CD14-positive monocyte (primary cell): ENCODE measurements at regions of chr19 and their contacts with region 1.

Region 1: DNA sequence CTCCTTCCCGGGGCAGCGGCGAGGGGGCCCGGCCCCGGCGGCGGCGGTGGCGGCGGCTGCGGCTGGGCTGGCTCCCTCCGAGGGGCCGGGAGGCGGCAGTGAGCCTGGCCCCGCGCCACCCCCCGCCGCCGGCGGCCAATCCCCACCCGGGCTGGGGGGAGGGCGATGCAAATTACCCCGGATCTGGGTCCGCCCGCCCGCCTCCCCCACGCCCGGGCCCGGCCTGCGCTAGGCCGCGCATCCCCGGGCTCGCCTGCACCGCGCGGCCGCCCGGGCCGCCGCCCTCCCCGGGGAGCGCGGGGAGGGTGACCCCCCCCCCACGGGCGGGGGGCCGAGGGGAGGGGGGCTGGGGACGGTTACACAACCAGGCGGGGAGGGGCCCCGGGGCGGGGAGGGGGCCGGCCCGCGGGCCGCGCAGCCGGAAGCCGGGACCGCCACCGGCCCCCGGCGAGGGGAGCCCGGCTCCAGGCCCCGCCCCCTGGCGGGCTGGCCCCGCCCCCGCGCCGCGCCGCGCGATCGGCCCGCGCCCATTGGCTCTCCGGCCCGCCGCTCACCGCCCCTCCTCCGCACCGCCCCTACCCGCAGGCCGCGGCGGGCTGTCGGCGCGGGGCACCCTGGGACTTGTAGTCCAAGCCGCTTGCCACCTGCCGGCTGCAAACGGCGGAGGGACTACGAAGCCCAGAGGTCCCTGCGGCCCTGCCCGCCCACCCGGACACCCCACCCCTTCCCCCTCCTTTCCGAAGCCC is 1.1 kb downstream of the ZBTB7A start:
- DNase-seq: peak; percentile 93 to 96 (median 95)
- H3K4me3 ChIP-seq: peak overlapping the region; percentile 86 to 96 (median 93)
- H3K4me3 Mint-ChIP-seq: peak overlapping the region in 1 of 2 donors; percentile 67
- H3K27ac ChIP-seq: peak overlapping the region in 1 of 2 donors; percentile 77
- H3K27ac Mint-ChIP-seq: peak overlapping the region in 3 of 7 donors; percentile 16 to 79 (median 75)
- H3K4me1 ChIP-seq: peaks cover 58 to 62% of the 10 kb centered on the region in 2 donors
- H3K4me1 Mint-ChIP-seq: peaks cover 48% of the 10 kb centered on the region
- H3K27me3 ChIP-seq: no peaks in the 10 kb centered on the region
- H3K27me3 Mint-ChIP-seq: peaks cover 0 to 2% (median 0%) of the 10 kb centered on the region in 3 donors
- CTCF ChIP-seq: no peak

Region 2: GRCh38 chr19:3984908-3985642 is 80.5 kb before region 1 on chr19 and contains the start of gene EEF2:
- intact Hi-C with region 1: loop called in 1 of 2 experiments (anchors 5 kb)
- DNase-seq: peak; percentile 92 to 93 (median 92)
- H3K4me3 ChIP-seq: peak within 1 kb of the TSS; percentile 76 to 97 (median 93)
- H3K4me3 Mint-ChIP-seq: peak within 1 kb of the TSS; percentile 96 to 97
- H3K27ac ChIP-seq: peak within 1 kb of the TSS; percentile 83 to 93
- H3K27ac Mint-ChIP-seq: peak within 1 kb of the TSS; percentile 93 to 99 (median 96)
- H3K4me1 ChIP-seq: peaks cover 35 to 44% of the 10 kb centered on the region in 2 donors
- H3K4me1 Mint-ChIP-seq: peaks cover 40% of the 10 kb centered on the region
- H3K27me3 ChIP-seq: no peaks in the 10 kb centered on the region
- H3K27me3 Mint-ChIP-seq: peaks cover 0 to 3% (median 0%) of the 10 kb centered on the region in 3 donors
- CTCF ChIP-seq: no peak
- polyA plus RNA-seq, gene EEF2: 264 to 836 (median 323) TPM

Region 3: DNA sequence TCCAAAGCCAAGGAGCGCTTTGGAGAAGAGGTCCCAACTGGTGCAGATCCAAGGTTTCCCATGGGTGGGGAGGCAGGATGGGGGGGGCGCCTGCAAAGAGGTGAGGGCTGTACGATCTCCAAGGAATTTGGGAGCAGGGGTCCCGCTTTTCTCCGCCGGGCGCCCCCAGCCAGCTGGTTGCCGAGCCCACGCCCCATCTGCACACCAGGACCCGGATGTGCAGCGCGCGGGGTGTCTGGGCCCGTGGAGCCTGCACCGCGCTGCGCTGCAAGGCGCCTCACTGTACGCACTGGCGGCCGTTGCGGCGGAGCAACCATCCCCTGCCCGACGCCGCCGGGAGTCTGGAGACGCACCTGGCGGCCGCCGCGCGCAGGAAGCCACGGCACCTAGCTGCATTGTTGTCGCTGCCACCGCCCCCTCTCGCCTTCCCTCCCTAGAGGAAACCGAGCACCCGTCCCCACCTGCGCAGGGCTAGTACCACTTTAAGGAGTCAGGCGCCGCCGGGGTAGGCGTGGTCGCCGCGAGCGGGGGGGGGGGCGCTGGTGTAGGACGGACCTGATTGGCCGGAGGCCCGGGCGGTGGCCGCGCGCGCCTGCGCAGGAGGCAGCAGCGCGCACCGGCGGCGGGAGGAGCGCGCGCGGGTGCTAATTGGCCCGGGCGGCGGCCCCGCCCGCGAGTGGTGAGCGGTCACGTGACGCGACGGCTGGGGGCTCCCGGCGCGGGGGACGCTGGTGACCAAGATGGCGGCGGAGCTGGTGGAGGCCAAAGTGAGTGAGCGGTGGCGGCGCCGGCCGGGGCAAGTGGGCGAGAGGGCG is 58.4 kb before region 1 on chr19 and contains the start of gene PIAS4:
- intact Hi-C with region 1: loop called in 1 of 2 experiments (anchors 5 kb)
- DNase-seq: peak; percentile 92 to 96 (median 95)
- H3K4me3 ChIP-seq: peak within 1 kb of the TSS; percentile 74 to 84 (median 79)
- H3K4me3 Mint-ChIP-seq: peak within 1 kb of the TSS; percentile 84 to 91
- H3K27ac ChIP-seq: peak within 1 kb of the TSS in 1 of 2 donors; percentile 71
- H3K27ac Mint-ChIP-seq: peak within 1 kb of the TSS; percentile 37 to 85 (median 69)
- H3K4me1 ChIP-seq: peaks cover 19 to 32% of the 10 kb centered on the region in 2 donors
- H3K4me1 Mint-ChIP-seq: peaks cover 30% of the 10 kb centered on the region
- H3K27me3 ChIP-seq: no peaks in the 10 kb centered on the region
- H3K27me3 Mint-ChIP-seq: peaks cover 0 to 1% (median 0%) of the 10 kb centered on the region in 3 donors
- CTCF ChIP-seq: no peak
- polyA plus RNA-seq, gene PIAS4: 2.3 to 8.1 (median 5.9) TPM

Region 4: DNA sequence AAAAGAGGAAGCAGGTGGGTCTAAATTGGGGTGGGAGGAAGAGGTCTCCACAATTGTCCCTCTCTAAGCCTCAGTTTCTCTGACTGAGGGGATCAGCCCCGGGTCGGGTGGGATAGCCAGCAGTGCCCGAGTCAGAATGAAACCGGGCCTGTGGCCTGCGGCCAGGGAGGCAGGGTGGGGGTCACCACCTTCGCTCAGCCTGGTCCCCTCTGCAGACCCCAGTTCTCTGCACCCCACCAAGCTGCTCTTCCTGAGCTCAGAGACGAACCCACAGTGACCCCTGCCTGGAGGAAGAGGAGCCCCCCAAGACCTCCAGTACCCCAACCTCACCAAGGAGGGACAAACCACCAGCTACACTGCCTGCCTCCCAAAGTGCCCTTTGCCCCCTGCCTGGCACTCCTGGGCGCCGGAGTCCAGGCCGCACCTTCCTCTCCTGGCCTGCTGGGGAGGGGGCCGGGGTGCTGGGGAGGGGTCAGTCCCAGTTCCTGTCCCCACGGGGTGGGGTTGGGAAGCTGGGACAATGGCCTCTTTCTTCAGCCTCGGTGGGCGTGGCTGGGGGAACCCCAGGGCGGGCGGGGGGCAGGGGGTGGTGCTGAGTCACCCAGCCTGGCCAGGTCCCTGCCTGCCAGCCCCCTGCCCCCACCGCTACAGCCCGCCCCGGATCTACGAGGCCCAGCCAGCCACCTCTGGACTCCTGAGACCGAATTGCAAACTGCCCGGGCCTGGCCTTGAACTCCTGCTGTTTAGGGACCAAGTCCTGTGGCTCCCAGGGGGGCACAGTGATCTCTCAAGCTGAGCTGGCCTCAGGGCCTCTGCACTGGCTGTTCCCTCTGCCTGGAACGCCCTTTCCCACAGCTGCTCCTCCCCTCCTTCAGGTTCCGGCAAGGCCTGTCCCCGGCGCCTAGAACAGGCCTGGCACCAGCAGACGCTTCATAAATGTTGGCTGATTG is 13.3 kb before region 1 on chr19:
- intact Hi-C with region 1: loop called in 1 of 2 experiments (anchors 2 kb)
- DNase-seq: peak; percentile 89 to 94 (median 90)
- H3K4me3 ChIP-seq: peak overlapping the region; percentile 4 to 55 (median 17)
- H3K4me3 Mint-ChIP-seq: peak overlapping the region; percentile 83 to 85
- H3K27ac ChIP-seq: peak overlapping the region; percentile 93 to 100
- H3K27ac Mint-ChIP-seq: peak overlapping the region; percentile 96 to 99 (median 98)
- H3K4me1 ChIP-seq: peaks cover 42 to 56% of the 10 kb centered on the region in 2 donors
- H3K4me1 Mint-ChIP-seq: peaks cover 50% of the 10 kb centered on the region
- H3K27me3 ChIP-seq: no peaks in the 10 kb centered on the region
- H3K27me3 Mint-ChIP-seq: peaks cover 0 to 3% (median 0%) of the 10 kb centered on the region in 3 donors
- CTCF ChIP-seq: no peak

Region 5: GRCh38 chr19:4115050-4115817 is 49.6 kb after region 1 on chr19:
- intact Hi-C with region 1: loop called (anchors 5 kb)
- DNase-seq: peak; percentile 43 to 55 (median 49)
- H3K4me3 ChIP-seq: no peak overlapping the region
- H3K4me3 Mint-ChIP-seq: peak overlapping the region in 1 of 2 donors; percentile 82
- H3K27ac ChIP-seq: peak overlapping the region; percentile 54 to 78
- H3K27ac Mint-ChIP-seq: peak overlapping the region in 6 of 7 donors; percentile 38 to 88 (median 74)
- H3K4me1 ChIP-seq: peaks cover 10 to 16% of the 10 kb centered on the region in 2 donors
- H3K4me1 Mint-ChIP-seq: peaks cover 17% of the 10 kb centered on the region
- H3K27me3 ChIP-seq: no peaks in the 10 kb centered on the region
- H3K27me3 Mint-ChIP-seq: no peaks in the 10 kb centered on the region
- CTCF ChIP-seq: no peak

Region 6: GRCh38 chr19:4123615-4124568 is 58.3 kb after region 1 on chr19 and contains the start of gene MAP2K2:
- intact Hi-C with region 1: loop called (anchors 5 kb)
- DNase-seq: peak; percentile 91 to 94 (median 93)
- H3K4me3 ChIP-seq: peak within 1 kb of the TSS; percentile 59 to 95 (median 81)
- H3K4me3 Mint-ChIP-seq: peak within 1 kb of the TSS; percentile 89 to 90
- H3K27ac ChIP-seq: peak within 1 kb of the TSS in 1 of 2 donors; percentile 75
- H3K27ac Mint-ChIP-seq: peak within 1 kb of the TSS in 6 of 7 donors; percentile 60 to 94 (median 86)
- H3K4me1 ChIP-seq: peaks cover 17 to 19% of the 10 kb centered on the region in 2 donors
- H3K4me1 Mint-ChIP-seq: peaks cover 17% of the 10 kb centered on the region
- H3K27me3 ChIP-seq: no peaks in the 10 kb centered on the region
- H3K27me3 Mint-ChIP-seq: peaks cover 0 to 3% (median 0%) of the 10 kb centered on the region in 3 donors
- CTCF ChIP-seq: no peak
- polyA plus RNA-seq, gene MAP2K2: 30.5 to 94.5 (median 40.2) TPM